ENCODE measurements at regions of chr15 and their contacts with region 1.

Region 1: GRCh38 chr15:31488426-31489204 is 162.0 kb downstream of the KLF13 start:
- DNase-seq: peak; percentile 50
- ATAC-seq: peak; percentile 77 to 87

Region 2: GRCh38 chr15:31200735-31201151 is 287.9 kb before region 1 on chr15:
- intact Hi-C with region 1: loop called (anchors 2 to 5 kb)
- DNase-seq: peak; percentile 74
- ATAC-seq: peak; percentile 80 to 89

Region 3: DNA sequence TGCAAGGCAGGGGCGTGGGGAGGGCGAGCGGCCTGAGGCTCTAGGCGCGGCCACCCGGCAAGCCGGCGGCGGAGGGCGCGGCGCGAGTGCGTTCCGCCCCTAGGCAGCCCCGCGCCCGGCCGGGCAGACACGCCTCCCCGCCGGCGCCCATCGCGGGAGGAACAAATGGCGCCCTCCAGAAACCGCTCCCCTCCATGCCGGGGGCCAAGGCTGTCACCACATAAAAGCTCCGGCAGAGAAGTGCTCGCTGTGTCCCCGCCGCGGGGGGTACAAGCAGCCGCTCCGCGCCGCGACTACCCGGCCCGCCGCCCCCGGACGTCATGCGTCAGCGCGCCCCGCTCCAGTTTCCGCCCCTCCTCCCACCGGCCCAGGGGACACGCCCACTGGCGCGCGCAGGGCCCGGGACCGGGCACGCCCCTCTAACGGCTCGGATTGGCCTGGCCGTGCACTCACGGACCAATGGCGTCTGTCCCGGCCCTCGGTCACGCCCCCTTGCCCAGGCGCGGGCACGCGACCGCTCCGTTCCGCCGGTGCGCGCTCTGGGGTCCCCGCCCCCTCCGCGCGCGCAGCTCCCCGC is 162.4 kb before region 1 on chr15:
- intact Hi-C with region 1: loop called in 1 of 2 experiments (anchors 10 kb)
- DNase-seq: peak; percentile 94
- ATAC-seq: peak; percentile 89 to 91

Region 4: GRCh38 chr15:31402511-31403056 is 86.0 kb before region 1 on chr15:
- intact Hi-C with region 1: loop called in 1 of 2 experiments (anchors 10 kb)
- DNase-seq: peak; percentile 69
- ATAC-seq: peak; percentile 80 to 82

Region 5: GRCh38 chr15:31415201-31415600 is 73.4 kb before region 1 on chr15:
- intact Hi-C with region 1: no loop called
- DNase-seq: no peak
- ATAC-seq: no peak

Region 6: GRCh38 chr15:31435261-31435911 is 53.2 kb before region 1 on chr15:
- intact Hi-C with region 1: loop called in 1 of 2 experiments (anchors 10 kb)
- DNase-seq: peak; percentile 68
- ATAC-seq: peak; percentile 81 to 89

Region 7: GRCh38 chr15:31554261-31554660 is 65.6 kb after region 1 on chr15:
- intact Hi-C with region 1: loop called in 1 of 2 experiments (anchors 10 kb)
- DNase-seq: peak; percentile 64
- ATAC-seq: peak; percentile 85 to 92